ENCODE measurements at regions of chr3 and their contacts with region 1.

Region 1: DNA sequence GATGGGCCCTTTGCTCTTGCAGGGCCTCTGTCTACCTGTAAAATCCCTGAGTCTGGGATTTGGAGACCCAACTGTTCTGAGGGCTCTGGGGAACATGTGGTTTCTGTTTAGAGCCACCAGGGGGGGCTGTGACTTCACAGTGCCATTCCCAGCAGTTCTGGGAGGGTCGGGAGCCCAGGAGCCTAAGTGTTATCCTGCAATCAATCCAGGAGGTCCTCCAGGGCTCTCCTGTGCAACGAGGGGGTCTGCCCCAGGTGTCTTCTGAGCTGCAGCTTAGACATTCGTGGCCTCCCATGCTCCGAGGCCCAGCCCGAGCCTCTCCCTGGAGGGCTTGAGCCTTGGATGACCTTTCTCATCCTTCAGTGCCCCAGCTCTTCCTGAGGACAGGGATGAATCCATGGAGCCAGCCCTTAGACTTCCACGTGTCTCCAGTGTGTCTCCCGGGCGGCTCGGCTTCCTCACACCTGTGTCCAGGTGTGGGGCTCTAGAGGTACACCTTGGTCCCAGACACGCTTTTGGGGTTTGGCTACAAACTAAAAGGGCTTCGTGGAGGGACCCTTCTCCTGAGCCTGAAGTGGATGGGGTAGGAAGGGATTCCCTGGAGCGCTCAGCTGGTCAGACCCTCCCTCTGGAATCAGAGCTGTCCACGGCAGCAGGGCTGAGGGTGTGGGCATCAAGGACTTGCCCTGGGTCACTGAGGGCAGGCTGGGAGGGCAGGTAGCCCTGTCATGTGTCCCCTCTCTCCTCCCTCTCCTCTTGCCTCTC is 20.3 kb upstream of the ABTB1 start:
- DNase-seq: peak in 1 of 2 experiments; percentile 57
- H3K4me3 ChIP-seq: no peak overlapping the region
- H3K27ac ChIP-seq: no peak overlapping the region
- H3K4me1 ChIP-seq: peaks cover 26% of the 10 kb centered on the region
- H3K27me3 ChIP-seq: no peaks in the 10 kb centered on the region
- CTCF ChIP-seq: peak; percentile 92

Region 2: GRCh38 chr3:127889461-127889863 is 237.0 kb after region 1 on chr3:
- CTCF ChIA-PET with region 1: interaction called, 11 read pairs
- POLR2A ChIA-PET with region 1: no interaction called
- intact Hi-C with region 1: no loop called
- DNase-seq: no peak
- H3K4me3 ChIP-seq: no peak overlapping the region
- H3K27ac ChIP-seq: no peak overlapping the region; the same call in 1 of the 2 replicates
- H3K4me1 ChIP-seq: 0 out of 2 replicates have a peak, but pooled peaks cover 5% of the 10 kb centered on the region
- H3K27me3 ChIP-seq: no peaks in the 10 kb centered on the region
- CTCF ChIP-seq: no peak

Region 3: GRCh38 chr3:127959846-127960245 is 307.4 kb after region 1 on chr3:
- CTCF ChIA-PET with region 1: no interaction called
- POLR2A ChIA-PET with region 1: no interaction called
- intact Hi-C with region 1: loop called (anchors 1 kb)
- DNase-seq: peak; percentile 69 to 85
- H3K4me3 ChIP-seq: no peak overlapping the region
- H3K27ac ChIP-seq: no peak overlapping the region
- H3K4me1 ChIP-seq: peaks cover 34% of the 10 kb centered on the region
- H3K27me3 ChIP-seq: no peaks in the 10 kb centered on the region
- CTCF ChIP-seq: peak; percentile 63

Region 4: DNA sequence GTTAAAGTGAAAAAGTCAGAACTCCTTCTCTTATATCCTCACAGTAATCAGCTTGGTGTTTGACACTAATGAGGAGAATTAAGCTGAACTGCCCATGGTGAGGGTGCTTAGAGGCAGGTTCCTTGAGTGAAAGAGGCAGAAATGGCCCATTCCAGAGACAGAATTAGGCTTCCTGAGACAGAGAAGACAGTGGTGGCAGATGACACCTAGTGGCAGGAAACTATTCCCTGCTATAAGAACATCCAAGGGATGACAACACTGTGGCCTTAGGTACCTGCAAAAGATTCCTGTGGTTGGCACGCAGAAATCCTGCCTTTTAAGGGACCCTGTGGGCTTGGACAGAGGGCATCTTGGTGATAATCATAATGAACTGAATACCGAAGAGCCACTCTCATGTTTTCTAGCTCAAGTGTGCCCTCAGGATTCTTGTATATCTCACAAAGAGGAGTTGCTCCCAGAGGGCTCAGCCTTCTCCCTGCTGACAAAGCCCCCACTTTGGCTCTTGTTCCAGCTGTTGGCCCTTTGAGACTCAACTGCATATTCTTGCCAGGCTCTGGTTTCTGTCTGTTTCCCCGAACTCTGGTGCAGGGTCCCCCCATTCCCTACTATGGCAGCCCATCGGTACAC is 318.7 kb after region 1 on chr3:
- CTCF ChIA-PET with region 1: no interaction called
- POLR2A ChIA-PET with region 1: no interaction called
- intact Hi-C with region 1: loop called (anchors 1 kb)
- DNase-seq: peak; percentile 56 to 59
- H3K4me3 ChIP-seq: no peak overlapping the region
- H3K27ac ChIP-seq: no peak overlapping the region
- H3K4me1 ChIP-seq: no peaks in the 10 kb centered on the region
- H3K27me3 ChIP-seq: no peaks in the 10 kb centered on the region
- CTCF ChIP-seq: peak; percentile 81

Region 5: DNA sequence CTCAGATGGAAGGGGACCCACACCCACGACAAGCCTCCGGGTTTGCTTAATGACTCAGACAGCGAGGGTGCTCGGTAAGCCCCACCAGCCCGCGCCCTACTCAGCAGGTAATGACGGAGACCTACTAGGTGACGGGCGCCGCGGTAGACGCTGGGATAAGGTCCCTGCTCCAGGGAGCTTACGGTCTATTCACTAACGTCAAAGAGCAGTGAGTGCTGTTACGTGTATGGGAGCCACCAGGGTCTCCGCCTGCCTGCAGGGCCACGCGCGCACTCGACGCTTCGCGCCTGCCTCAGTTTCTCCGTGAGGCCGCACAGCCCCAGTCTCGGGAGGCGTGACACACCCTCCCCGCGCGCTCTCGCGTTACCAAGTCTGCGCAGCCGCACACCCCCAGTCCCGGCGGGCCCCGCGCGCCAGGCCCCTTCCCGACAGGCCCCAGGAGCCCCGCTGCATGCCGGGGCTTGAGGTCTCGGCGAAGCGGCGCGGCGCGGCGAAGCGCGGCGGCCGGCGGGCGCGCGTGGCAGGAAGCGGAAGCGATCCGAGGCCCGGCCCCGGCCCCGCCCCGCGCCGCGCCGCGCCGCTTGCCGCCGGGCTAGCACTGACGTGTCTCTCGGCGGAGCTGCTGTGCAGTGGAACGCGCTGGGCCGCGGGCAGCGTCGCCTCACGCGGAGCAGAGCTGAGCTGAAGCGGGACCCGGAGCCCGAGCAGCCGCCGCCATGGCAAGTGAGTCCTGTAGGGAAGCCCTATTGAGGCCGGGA is 399.6 kb after region 1 on chr3 and contains the start of gene SEC61A1:
- CTCF ChIA-PET with region 1: no interaction called
- POLR2A ChIA-PET with region 1: no interaction called
- intact Hi-C with region 1: loop called (anchors 5 kb)
- DNase-seq: peak; percentile 78 to 98
- H3K4me3 ChIP-seq: peak within 1 kb of the TSS; percentile 99
- H3K27ac ChIP-seq: peak within 1 kb of the TSS; percentile 81
- H3K4me1 ChIP-seq: peaks cover 26% of the 10 kb centered on the region
- H3K27me3 ChIP-seq: no peaks in the 10 kb centered on the region
- CTCF ChIP-seq: no peak
- total RNA-seq, gene SEC61A1: 110 and 189 TPM in 2 replicates

Region 6: DNA sequence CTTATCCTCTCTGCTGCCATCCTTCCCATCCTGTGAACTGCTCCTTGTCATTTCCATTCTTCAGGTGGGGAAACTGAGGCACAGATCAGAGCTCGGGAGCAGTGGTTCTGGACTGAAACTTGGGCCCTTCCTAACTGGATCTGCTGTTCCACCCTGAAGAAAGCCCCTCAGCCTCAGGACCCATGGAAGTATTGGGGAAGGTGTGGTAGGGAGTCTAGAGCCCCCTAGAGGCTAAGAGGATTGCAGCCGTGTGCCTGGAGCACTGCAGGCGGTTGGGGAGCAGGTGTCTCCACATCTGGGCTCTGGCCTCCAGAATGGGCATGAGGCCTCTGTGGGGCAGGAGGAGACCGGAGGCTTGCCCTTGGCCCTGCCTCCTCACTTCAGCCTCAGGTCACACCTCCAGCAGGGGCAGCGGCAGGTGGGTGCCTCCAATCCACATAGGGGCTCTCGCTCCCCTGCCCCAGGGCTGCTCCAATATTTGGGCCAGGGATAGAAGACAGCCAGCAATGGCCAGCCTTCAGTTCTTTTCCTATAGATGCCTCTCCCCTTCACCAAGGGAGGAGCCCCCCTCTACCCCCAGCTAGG is 786.2 kb after region 1 on chr3:
- CTCF ChIA-PET with region 1: no interaction called
- POLR2A ChIA-PET with region 1: no interaction called
- intact Hi-C with region 1: no loop called
- DNase-seq: no peak
- H3K4me3 ChIP-seq: no peak overlapping the region
- H3K27ac ChIP-seq: no peak overlapping the region
- H3K4me1 ChIP-seq: peaks cover 45% of the 10 kb centered on the region
- H3K27me3 ChIP-seq: no peaks in the 10 kb centered on the region
- CTCF ChIP-seq: no peak; the same call in 1 of the 2 replicates